ENCODE measurements at regions of chr10 and their contacts with region 1.

Region 1: GRCh38 chr10:95963226-95963990 is 55.6 kb downstream of the CC2D2B start:
- DNase-seq: no peak

Region 2: GRCh38 chr10:96153070-96153469 is 189.7 kb after region 1 on chr10:
- intact Hi-C with region 1: loop called in 1 of 2 experiments (anchors 5 kb)
- DNase-seq: no peak

Region 3: GRCh38 chr10:96229568-96230030 is 266.2 kb after region 1 on chr10:
- intact Hi-C with region 1: no loop called
- DNase-seq: peak; percentile 91